HCT116 (cell line): ENCODE measurements at regions of chr7 and their contacts with region 1.

Region 1: DNA sequence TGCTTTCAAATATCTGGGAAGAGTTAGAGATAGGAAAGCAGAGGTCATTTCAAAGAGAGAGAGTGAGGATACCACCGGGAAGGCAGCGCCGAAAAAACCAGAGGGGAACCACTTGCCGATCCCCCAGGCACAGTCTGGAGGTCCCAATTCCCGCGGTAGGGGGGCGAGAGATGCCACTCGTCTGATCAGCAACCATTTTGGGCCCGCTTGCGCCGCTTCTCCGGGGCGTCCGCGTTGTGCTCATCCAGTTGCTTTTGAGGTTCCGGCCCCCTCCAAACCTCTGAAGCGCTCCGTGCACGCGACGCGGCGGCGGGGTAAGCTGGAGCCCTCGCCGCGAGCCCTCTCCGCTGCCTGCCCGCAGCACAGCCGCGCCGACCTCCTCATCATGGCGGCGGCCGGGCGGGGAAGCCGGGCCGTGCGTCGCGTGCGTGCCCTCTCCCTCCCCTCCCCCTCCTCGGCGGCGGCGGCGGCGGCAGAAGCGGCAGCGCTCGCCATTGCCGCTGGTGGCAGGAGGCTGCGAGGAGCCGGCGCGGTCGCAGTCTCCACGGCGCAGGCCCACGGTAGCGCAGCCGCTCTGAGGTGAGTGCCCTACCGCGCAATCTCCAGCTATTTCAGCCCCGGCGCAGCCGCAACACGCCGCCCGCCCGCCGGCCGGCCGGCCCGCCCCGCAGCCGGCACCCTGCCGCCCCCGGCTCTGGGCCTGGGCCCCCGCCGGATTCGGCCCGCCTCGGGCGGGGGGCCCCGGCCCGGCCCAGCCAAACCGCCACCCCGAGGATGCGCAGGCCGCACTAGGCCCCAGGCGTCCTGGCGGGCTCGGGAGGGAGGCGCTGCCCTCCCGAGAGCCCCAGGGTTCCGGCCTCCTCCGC is at the start of gene NRF1:
- DNase-seq: peak; percentile 48
- ATAC-seq: peak; percentile 88
- H3K4me3 ChIP-seq: peak within 1 kb of the TSS; percentile 87 to 96
- H3K27ac ChIP-seq: peak within 1 kb of the TSS; percentile 88
- H3K4me1 ChIP-seq: peaks cover 6 to 24% of the 10 kb centered on the region in 2 experiments; a peak in 3 of 4 replicates
- H3K27me3 ChIP-seq: no peaks in the 10 kb centered on the region
- CTCF ChIP-seq: no peak
- POLR2A ChIP-seq: peak; percentile 82
- RAD21 ChIP-seq: no peak
- total RNA-seq, gene NRF1: 25.9 TPM

Region 2: DNA sequence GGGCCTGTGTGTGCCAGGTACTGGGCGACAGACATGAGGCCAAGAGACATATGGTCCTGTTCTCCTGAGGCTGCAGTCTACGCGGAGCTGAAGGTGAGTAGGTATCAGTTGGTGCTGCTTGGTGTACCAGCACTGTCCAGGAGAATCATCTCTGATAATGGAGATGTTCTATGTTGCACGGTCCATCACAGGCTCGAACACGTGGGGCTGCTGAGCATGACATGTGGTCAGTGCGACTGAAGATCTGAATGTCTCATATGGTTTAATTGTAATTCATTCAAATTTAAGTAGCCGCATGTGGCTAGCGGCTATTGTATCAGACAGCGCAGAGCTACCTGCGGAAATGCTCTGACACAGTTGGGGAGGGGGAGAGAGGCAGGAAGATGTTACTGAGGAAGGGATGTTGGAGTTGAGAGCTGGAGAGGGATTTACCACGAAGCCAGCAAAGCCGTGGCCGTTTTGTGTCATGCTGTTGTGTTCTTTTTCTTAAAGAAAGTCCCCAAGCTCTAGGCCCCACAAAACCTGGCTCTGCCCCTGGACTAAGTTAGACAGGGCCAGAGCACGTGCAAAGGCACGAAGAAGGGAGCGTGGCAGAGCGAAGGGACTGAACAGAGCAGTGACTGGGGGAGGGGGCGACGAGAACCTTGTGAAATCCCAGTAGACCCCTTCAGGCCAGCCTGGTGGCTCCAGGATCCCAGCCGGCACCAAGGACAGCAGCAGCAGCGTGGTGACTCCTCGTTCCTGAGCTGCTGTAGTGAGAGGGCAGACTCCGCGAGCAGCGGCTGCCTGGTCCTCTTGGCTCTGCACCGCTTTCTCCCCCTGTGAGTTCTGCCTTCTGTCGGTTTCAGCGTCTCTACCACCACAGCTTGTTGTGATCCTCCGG is 89.2 kb before region 1 on chr7:
- CTCF ChIA-PET with region 1: no interaction called
- POLR2A ChIA-PET with region 1: interaction called, 3 read pairs
- RAD21 ChIA-PET with region 1: no interaction called
- intact Hi-C with region 1: loop called (anchors 5 kb)
- DNase-seq: no peak
- ATAC-seq: no peak
- H3K4me3 ChIP-seq: no peak overlapping the region
- H3K27ac ChIP-seq: no peak overlapping the region
- H3K4me1 ChIP-seq: peaks cover 6 to 16% of the 10 kb centered on the region in 2 experiments
- H3K27me3 ChIP-seq: no peaks in the 10 kb centered on the region
- CTCF ChIP-seq: no peak
- POLR2A ChIP-seq: no peak
- RAD21 ChIP-seq: no peak

Region 3: GRCh38 chr7:129597672-129598071 is 13.8 kb before region 1 on chr7:
- CTCF ChIA-PET with region 1: interaction called, 10 read pairs
- POLR2A ChIA-PET with region 1: interaction called, 3 read pairs
- RAD21 ChIA-PET with region 1: no interaction called
- intact Hi-C with region 1: no loop called
- DNase-seq: no peak
- ATAC-seq: no peak
- H3K4me3 ChIP-seq: no peak overlapping the region
- H3K27ac ChIP-seq: no peak overlapping the region
- H3K4me1 ChIP-seq: peaks cover 9 to 21% of the 10 kb centered on the region in 2 experiments
- H3K27me3 ChIP-seq: no peaks in the 10 kb centered on the region
- CTCF ChIP-seq: no peak
- POLR2A ChIP-seq: no peak
- RAD21 ChIP-seq: no peak

Region 4: DNA sequence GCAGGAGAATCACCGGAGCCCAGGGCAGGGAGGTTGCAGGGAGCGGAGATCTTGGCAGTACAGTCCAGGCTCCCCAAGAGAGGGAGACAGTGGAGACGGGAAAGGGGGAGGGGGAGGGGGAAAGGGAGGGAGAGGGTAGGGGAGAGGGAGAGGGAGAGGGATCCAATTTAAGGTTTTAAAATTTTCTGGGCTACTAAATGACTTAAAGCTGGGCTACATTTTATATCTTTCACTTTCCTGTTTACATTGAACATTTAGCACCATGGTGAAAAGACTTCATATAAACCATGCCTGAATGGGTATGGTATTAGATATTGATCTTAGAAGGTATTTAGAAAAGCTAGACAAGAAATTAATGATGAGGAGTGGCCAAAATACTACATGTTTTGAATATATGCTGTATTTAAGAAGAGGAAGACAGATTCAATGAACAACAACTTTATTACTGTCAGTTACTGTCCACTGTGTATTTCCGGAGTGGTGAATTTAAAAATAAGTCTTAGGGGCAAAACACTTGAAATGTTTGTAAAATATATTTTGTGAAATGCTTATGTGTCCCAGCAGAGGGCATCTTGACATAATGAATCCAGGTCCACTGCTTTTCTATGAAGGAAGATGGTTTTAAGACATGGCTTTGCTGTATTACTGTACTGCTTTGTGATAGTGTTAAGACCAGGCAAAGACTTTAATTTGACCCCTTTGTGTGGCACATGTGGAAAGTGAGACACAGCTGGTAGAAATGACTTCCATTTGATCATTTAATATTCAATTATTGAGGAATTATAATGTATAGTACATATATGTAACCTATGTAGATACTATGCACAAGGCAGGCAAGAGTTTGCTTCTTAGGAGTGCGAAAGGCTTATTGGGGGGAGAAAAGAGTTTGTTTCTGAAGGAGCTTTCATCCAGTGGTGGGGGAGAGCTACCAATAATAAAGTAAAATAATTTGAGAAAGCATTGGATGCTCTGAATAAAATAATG is 52.8 kb after region 1 on chr7:
- CTCF ChIA-PET with region 1: no interaction called
- POLR2A ChIA-PET with region 1: no interaction called
- RAD21 ChIA-PET with region 1: no interaction called
- intact Hi-C with region 1: no loop called
- DNase-seq: peak; percentile 45
- ATAC-seq: peak; percentile 66
- H3K4me3 ChIP-seq: 0 out of 4 replicates have a peak overlapping the region, but pooled peaks of 1 of the 2 experiments have one; percentile 7
- H3K27ac ChIP-seq: peak overlapping the region; percentile 54
- H3K4me1 ChIP-seq: peaks cover 16 to 30% of the 10 kb centered on the region in 2 experiments
- H3K27me3 ChIP-seq: no peaks in the 10 kb centered on the region
- CTCF ChIP-seq: peak; percentile 43 to 92 (median 66); a peak in 5 of 6 replicates
- POLR2A ChIP-seq: no peak
- RAD21 ChIP-seq: peak; percentile 94

Region 5: GRCh38 chr7:129952653-129953560 is 341.4 kb after region 1 on chr7 and contains the start of gene UBE2H:
- CTCF ChIA-PET with region 1: no interaction called
- POLR2A ChIA-PET with region 1: no interaction called
- RAD21 ChIA-PET with region 1: no interaction called
- intact Hi-C with region 1: loop called (anchors 5 kb)
- DNase-seq: peak; percentile 83
- ATAC-seq: peak; percentile 72
- H3K4me3 ChIP-seq: peak within 1 kb of the TSS; percentile 77 to 87
- H3K27ac ChIP-seq: peak within 1 kb of the TSS; percentile 81
- H3K4me1 ChIP-seq: peaks cover 35 to 55% of the 10 kb centered on the region in 2 experiments
- H3K27me3 ChIP-seq: no peaks in the 10 kb centered on the region
- CTCF ChIP-seq: no peak
- POLR2A ChIP-seq: peak; percentile 52
- RAD21 ChIP-seq: no peak
- total RNA-seq, gene UBE2H: 117 TPM